Endothelial cell of umbilical vein (primary cell): ENCODE measurements at regions of chr10 and their contacts with region 1.

Region 1: DNA sequence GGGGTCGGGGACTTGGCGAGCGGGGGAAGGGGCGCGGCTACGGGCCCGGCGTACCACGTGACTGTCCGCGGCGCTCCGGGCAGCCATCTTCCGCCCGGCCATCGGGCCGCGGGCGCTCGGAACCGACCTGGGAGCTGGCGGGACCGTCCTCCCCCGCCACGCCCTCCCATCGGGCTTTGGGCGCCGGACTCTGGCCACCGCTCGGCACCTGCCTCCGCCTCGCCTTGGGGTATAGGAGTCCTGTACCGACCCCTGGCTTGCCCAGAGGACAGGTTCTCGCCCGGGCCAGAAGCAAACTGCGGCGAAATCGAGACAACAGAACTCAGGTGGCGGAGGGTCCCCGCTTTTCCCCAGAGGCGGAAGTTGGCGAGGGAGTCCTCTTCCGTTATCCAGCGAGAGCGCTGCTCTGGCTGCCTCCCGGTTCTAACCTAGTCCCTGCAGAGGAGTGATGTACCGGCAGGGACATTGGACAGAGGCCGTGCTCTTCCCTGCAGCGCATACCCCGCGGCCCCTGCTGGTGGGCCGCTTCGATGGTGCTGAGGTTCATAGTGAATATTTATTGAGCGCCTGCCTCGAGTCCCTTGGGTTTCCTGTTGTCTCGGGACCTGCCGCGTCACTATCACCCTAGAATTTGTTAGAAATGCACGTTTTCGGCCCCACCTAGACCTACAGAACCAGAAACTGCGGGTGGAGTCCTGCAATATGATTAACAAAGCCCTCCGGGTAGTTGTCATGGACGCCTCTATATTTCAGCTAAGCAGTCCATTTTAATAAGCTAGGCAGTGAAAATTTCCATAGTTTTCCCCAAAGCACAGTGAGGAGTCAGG is 1.3 kb upstream of the SGMS1 start:
- DNase-seq: peak; percentile 76
- H3K4me3 ChIP-seq: peak overlapping the region; percentile 55 to 72 (median 71)
- H3K27ac ChIP-seq: peak overlapping the region; percentile 94
- H3K4me1 ChIP-seq: peaks cover 20% of the 10 kb centered on the region
- H3K27me3 ChIP-seq: no peaks in the 10 kb centered on the region
- CTCF ChIP-seq: peak; percentile 57 to 71
- POLR2A ChIP-seq: peak; percentile 52

Region 2: GRCh38 chr10:50291261-50291850 is 333.7 kb before region 1 on chr10:
- CTCF ChIA-PET with region 1: no interaction called
- POLR2A ChIA-PET with region 1: no interaction called
- dilution Hi-C with region 1: no loop called
- intact Hi-C with region 1: loop called (anchors 1 kb)
- DNase-seq: peak; percentile 18
- H3K4me3 ChIP-seq: no peak overlapping the region
- H3K27ac ChIP-seq: no peak overlapping the region
- H3K4me1 ChIP-seq: no peaks in the 10 kb centered on the region
- H3K27me3 ChIP-seq: peaks cover 5 to 10% of the 10 kb centered on the region in 2 experiments
- CTCF ChIP-seq: peak in 1 of 2 donors; percentile 25
- POLR2A ChIP-seq: no peak

Region 3: DNA sequence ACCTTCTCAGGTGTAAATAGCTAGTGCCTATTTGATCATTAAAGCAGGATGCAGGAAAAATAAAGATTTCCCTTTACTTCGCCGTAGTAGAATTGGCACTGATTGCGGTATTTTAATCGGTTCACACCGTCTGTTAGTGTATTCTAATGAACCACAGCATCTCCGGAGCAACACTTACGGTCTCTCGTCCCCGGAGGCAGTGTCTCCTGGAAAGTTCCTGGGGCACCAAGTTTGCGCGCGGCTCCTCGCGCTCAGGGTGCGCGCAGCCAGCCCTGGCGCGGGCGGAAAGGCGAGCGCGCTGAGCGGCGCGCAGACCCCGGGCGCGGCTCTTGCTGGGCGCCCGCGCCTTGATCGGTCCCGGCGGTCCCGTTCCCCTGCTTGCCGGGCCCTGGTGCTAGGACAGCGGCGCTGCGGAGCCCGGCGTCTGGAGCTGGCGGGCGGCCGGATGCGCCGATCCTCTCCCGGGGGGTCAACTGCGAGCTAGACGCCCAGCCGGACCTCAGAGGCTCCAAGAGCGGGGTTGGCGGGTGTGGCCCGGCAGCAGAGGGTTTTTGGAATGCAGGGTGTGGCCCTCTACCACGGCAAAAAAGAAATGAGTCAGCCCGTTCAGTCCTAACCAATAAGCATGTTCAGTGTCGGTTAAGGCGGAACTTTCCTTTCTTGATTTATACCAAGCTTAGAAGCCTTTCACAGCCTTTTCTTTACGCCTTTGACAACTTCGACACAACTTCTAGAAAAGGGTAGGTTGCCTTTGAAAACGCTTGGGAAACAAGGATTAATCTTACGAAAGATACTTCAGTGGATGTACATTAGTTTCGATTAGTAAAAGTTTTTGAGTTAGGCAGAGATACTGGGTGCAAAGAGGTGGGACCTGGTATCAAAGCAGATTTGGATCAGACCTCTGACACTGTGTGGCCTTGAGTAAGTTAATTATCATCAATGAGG is 206.9 kb before region 1 on chr10:
- CTCF ChIA-PET with region 1: interaction called, 19 read pairs
- POLR2A ChIA-PET with region 1: interaction called, 3 read pairs
- dilution Hi-C with region 1: no loop called
- intact Hi-C with region 1: loop called (anchors 1 kb)
- DNase-seq: peak; percentile 79
- H3K4me3 ChIP-seq: peak overlapping the region; percentile 25 to 86 (median 75)
- H3K27ac ChIP-seq: peak overlapping the region; percentile 47
- H3K4me1 ChIP-seq: peaks cover 14% of the 10 kb centered on the region
- H3K27me3 ChIP-seq: no peaks in the 10 kb centered on the region
- CTCF ChIP-seq: no peak
- POLR2A ChIP-seq: peak; percentile 63

Region 4: DNA sequence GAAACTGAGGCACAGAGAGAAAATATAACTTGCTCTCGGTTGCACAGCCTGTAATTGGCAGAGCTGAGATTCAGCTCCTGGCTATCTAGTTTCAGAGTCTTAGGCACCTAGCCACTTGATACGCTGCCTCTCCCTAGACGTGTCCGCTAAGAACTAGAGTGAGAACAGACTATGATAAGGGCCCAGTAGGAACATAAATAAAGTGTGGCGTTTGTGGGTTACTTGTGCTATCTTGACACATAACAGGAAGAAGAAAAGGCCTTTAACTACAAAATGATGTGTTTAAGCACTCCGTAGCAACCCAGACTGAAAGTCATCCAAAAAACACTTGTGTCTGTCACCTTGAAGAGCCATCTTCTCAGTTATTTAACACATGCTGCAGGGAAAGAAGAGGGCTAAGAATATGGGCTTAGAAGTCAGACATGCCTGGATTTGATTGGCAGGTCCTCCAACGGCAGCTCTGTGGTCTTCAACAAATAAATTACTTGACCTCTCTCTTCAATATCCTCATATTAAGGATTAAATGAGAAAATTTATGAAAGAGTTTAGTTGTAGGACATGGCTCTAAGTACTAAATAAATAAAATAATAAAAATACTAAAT is 97.5 kb before region 1 on chr10:
- CTCF ChIA-PET with region 1: no interaction called
- POLR2A ChIA-PET with region 1: no interaction called
- dilution Hi-C with region 1: no loop called
- intact Hi-C with region 1: no loop called
- DNase-seq: no peak
- H3K4me3 ChIP-seq: no peak overlapping the region
- H3K27ac ChIP-seq: no peak overlapping the region
- H3K4me1 ChIP-seq: no peaks in the 10 kb centered on the region
- H3K27me3 ChIP-seq: no peaks in the 10 kb centered on the region
- CTCF ChIP-seq: no peak
- POLR2A ChIP-seq: no peak

Region 5: GRCh38 chr10:50605269-50606263 is 19.5 kb before region 1 on chr10:
- CTCF ChIA-PET with region 1: interaction called, 24 read pairs
- POLR2A ChIA-PET with region 1: interaction called, 3 read pairs
- dilution Hi-C with region 1: no loop called
- intact Hi-C with region 1: loop called (anchors 1 kb)
- DNase-seq: peak; percentile 84
- H3K4me3 ChIP-seq: no peak overlapping the region
- H3K27ac ChIP-seq: peak overlapping the region; percentile 39
- H3K4me1 ChIP-seq: peaks cover 33% of the 10 kb centered on the region
- H3K27me3 ChIP-seq: no peaks in the 10 kb centered on the region
- CTCF ChIP-seq: no peak
- POLR2A ChIP-seq: no peak

Region 6: GRCh38 chr10:50653142-50653541 is 28.1 kb after region 1 on chr10:
- CTCF ChIA-PET with region 1: interaction called, 5 read pairs
- POLR2A ChIA-PET with region 1: no interaction called
- dilution Hi-C with region 1: no loop called
- intact Hi-C with region 1: loop called (anchors 1 kb)
- DNase-seq: peak; percentile 54
- H3K4me3 ChIP-seq: no peak overlapping the region
- H3K27ac ChIP-seq: no peak overlapping the region
- H3K4me1 ChIP-seq: peaks cover 22% of the 10 kb centered on the region
- H3K27me3 ChIP-seq: no peaks in the 10 kb centered on the region
- CTCF ChIP-seq: peak; percentile 29 to 42
- POLR2A ChIP-seq: no peak

Region 7: DNA sequence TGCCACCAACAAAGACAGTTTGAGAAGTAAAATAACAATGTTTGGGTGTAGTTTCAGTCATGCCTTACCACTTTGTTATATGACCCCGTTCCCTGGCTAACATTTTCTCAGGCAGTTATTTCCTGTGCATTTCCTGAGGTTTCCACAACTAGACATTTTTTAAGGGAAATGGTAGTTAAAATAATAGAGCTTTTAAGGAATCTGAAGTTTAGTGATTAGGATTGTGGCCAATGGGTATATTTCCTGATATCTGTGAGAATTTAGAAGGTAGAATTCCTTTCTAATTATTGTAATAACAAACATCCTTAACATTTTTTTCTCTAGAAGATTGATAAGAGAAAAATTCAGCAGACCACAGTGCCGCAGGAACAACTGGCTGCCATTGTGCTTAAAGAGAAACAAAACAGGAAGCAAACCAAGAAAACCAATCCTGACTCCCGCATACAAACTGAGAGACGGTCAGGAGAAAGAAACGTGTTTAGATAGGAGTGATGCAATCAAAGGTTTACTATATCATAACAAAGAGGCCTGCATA is 1953.9 kb after region 1 on chr10:
- CTCF ChIA-PET with region 1: no interaction called
- POLR2A ChIA-PET with region 1: no interaction called
- dilution Hi-C with region 1: no loop called
- intact Hi-C with region 1: loop called (anchors 5 kb)
- DNase-seq: peak; percentile 96
- H3K4me3 ChIP-seq: peak overlapping the region in 1 of 3 experiments; percentile 40
- H3K27ac ChIP-seq: peak overlapping the region; percentile 91
- H3K4me1 ChIP-seq: peaks cover 41% of the 10 kb centered on the region
- H3K27me3 ChIP-seq: no peaks in the 10 kb centered on the region
- CTCF ChIP-seq: no peak
- POLR2A ChIP-seq: no peak